ENCODE measurements at regions of chr7 and their contacts with region 1.

Region 1: DNA sequence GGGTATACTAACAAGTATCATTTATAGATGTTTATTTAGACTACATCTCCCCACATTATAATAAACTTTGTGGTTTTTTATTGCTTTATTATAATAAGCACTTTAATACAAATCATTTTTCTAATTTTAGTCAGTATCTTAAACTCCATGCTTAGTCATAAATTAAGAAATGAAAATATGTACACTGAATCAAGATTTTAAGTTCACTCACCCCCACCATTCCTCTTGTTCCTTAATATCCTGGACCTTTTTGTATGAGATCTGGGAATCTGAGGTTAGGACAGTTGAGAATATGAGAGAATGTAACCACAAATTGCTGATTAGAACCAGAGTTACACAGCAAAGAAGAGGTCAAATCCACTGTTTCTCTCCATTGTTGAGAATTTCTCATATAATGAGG is 93.6 kb upstream of the WNT16 start:
- DNase-seq: no peak
- ATAC-seq: no peak
- H3K4me3 Mint-ChIP-seq: no peak overlapping the region
- H3K27ac Mint-ChIP-seq: no peak overlapping the region
- H3K4me1 Mint-ChIP-seq: no peaks in the 10 kb centered on the region
- H3K27me3 Mint-ChIP-seq: no peaks in the 10 kb centered on the region
- CTCF ChIP-seq: no peak

Region 2: GRCh38 chr7:120360918-120361317 is 874.3 kb before region 1 on chr7:
- CTCF ChIA-PET with region 1: no interaction called
- POLR2A ChIA-PET with region 1: no interaction called
- intact Hi-C with region 1: no loop called
- DNase-seq: no peak
- ATAC-seq: no peak
- H3K4me3 Mint-ChIP-seq: no peak overlapping the region
- H3K27ac Mint-ChIP-seq: no peak overlapping the region
- H3K4me1 Mint-ChIP-seq: no peaks in the 10 kb centered on the region
- H3K27me3 Mint-ChIP-seq: no peaks in the 10 kb centered on the region
- CTCF ChIP-seq: no peak

Region 3: DNA sequence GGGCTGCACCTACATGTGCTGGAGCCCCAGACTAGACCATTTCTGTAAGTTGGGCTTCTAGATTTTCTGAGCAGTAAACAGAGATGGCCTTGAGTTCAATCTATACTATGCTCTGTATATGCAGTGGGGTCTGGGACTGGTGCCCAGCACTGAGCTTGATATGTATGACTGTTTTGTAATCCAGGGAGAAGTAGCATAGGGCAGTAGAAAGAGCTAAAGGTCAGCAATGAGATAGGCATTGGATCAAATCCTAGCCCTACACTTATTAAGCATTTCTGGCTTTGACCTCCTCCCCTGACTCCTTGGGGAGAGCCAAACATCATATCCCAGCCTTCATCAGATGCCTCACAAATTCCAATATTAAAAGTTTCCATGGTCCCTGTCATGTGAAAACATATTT is 631.8 kb before region 1 on chr7:
- CTCF ChIA-PET with region 1: no interaction called
- POLR2A ChIA-PET with region 1: no interaction called
- intact Hi-C with region 1: no loop called
- DNase-seq: no peak
- ATAC-seq: no peak
- H3K4me3 Mint-ChIP-seq: no peak overlapping the region
- H3K27ac Mint-ChIP-seq: no peak overlapping the region
- H3K4me1 Mint-ChIP-seq: no peaks in the 10 kb centered on the region
- H3K27me3 Mint-ChIP-seq: no peaks in the 10 kb centered on the region
- CTCF ChIP-seq: no peak

Region 4: GRCh38 chr7:121214657-121215056 is 20.5 kb before region 1 on chr7:
- CTCF ChIA-PET with region 1: no interaction called
- POLR2A ChIA-PET with region 1: no interaction called
- intact Hi-C with region 1: loop called (anchors 1 kb)
- DNase-seq: no peak
- ATAC-seq: no peak
- H3K4me3 Mint-ChIP-seq: no peak overlapping the region
- H3K27ac Mint-ChIP-seq: no peak overlapping the region
- H3K4me1 Mint-ChIP-seq: peaks cover 25% of the 10 kb centered on the region
- H3K27me3 Mint-ChIP-seq: no peaks in the 10 kb centered on the region
- CTCF ChIP-seq: no peak

Region 5: DNA sequence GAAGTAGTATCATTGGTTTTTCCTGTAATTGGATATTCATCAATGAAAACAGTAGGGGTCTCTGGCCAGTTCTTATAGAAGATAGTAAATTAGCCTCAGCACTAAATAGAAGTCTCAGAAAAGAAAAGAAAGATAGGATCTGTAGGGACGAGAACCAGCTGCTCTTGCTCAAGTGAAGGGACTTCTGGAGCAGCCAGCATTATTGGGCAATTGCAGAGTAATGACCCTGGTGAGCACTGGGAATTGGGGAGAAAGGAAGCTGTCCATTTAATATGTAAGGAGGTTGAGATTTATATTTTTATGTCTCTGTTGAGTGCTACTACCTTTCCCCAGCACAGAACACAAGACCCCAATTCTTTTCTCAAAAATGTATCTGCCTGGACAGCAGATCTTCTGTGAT is 32.4 kb after region 1 on chr7:
- CTCF ChIA-PET with region 1: no interaction called
- POLR2A ChIA-PET with region 1: no interaction called
- intact Hi-C with region 1: loop called (anchors 5 kb)
- DNase-seq: no peak
- ATAC-seq: no peak
- H3K4me3 Mint-ChIP-seq: no peak overlapping the region
- H3K27ac Mint-ChIP-seq: no peak overlapping the region
- H3K4me1 Mint-ChIP-seq: peaks cover 17% of the 10 kb centered on the region
- H3K27me3 Mint-ChIP-seq: no peaks in the 10 kb centered on the region
- CTCF ChIP-seq: no peak

Measured in activated B cell treated with CpG ODN at 0.5 μM for 24 hours (primary cell).